Mammary epithelial cell (primary cell): ENCODE measurements at regions of chr3 and their contacts with region 1.

Region 1: DNA sequence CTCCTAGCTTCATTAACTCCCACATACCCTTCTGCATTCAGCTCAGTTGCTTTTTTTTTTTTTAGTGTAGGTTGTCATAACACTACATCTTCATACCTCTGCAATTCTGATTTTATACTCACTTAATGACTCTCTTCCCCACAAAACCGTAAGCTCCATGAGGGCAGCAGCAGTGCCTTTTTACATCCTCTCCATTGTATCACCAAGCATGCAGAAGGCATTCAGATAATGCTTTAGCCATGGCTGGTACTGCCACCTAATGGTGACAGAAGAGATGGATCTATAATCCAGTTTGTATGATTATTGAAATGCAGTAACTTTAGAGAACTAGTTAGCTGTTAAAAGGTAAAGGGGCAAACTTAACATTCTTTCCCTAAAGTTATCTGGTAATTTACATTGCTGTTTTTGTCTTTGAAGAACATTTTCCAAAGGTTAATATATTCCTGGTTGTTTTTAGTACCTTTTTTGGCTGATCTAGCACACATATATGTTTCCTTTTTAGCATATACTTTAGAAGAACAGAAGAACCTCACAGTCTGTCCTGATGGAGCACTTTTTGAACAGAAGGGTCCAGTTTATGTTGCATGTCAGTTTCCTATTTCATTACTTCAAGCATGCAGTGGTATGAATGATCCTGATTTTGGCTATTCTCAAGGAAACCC is 36.8 kb downstream of the ATP1B3 start:
- DNase-seq: peak; percentile 42
- H3K4me3 ChIP-seq: no peak overlapping the region
- H3K27ac ChIP-seq: no peak overlapping the region
- H3K4me1 ChIP-seq: no peaks in the 10 kb centered on the region
- H3K27me3 ChIP-seq: no peaks in the 10 kb centered on the region
- CTCF ChIP-seq: peak; percentile 68 to 69

Region 2: DNA sequence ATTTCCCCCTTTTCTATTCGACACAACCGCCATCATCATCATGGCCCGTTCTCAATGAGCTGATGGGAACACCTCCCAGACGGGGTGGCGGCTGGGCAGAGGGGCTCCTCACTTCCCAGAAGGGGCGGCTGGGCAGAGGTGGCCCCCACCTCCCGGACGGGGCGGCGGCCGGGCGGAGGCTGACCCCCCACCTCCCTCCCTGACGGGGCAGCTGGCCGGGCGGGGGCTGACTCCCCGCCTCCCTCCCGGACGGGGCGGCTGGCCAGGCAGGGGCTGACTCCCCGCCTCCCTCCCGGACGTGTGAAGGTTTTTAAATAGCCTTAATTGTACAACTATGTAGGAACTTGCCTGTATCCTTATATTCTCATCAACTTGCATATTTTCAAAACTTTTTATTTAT is 883.0 kb before region 1 on chr3:
- CTCF ChIA-PET with region 1: no interaction called
- dilution Hi-C with region 1: no loop called
- in situ Hi-C with region 1: no loop called
- intact Hi-C with region 1: no loop called
- DNase-seq: no peak
- H3K4me3 ChIP-seq: no peak overlapping the region
- H3K27ac ChIP-seq: no peak overlapping the region
- H3K4me1 ChIP-seq: no peaks in the 10 kb centered on the region
- H3K27me3 ChIP-seq: peaks cover 4% of the 10 kb centered on the region
- CTCF ChIP-seq: no peak

Region 3: GRCh38 chr3:141575879-141576743 is 337.2 kb before region 1 on chr3:
- CTCF ChIA-PET with region 1: no interaction called
- dilution Hi-C with region 1: no loop called
- in situ Hi-C with region 1: no loop called
- intact Hi-C with region 1: loop called (anchors 5 kb)
- DNase-seq: no peak
- H3K4me3 ChIP-seq: no peak overlapping the region
- H3K27ac ChIP-seq: no peak overlapping the region
- H3K4me1 ChIP-seq: no peaks in the 10 kb centered on the region
- H3K27me3 ChIP-seq: no peaks in the 10 kb centered on the region
- CTCF ChIP-seq: peak; percentile 41 to 47

Region 4: GRCh38 chr3:141605883-141606282 is 307.4 kb before region 1 on chr3:
- CTCF ChIA-PET with region 1: no interaction called
- dilution Hi-C with region 1: no loop called
- in situ Hi-C with region 1: loop called in 1 of 2 experiments (anchors 25 kb)
- intact Hi-C with region 1: no loop called
- DNase-seq: no peak
- H3K4me3 ChIP-seq: no peak overlapping the region
- H3K27ac ChIP-seq: no peak overlapping the region
- H3K4me1 ChIP-seq: no peaks in the 10 kb centered on the region
- H3K27me3 ChIP-seq: no peaks in the 10 kb centered on the region
- CTCF ChIP-seq: no peak